ENCODE measurements at regions of chr7 and their contacts with region 1.

Region 1: GRCh38 chr7:89622838-89623672 is 531.2 kb upstream of the STEAP1 start:
- DNase-seq: no peak
- H3K4me3 Mint-ChIP-seq: no peak overlapping the region
- H3K27ac Mint-ChIP-seq: peak overlapping the region; percentile 11
- H3K4me1 Mint-ChIP-seq: peaks cover 26% of the 10 kb centered on the region
- H3K27me3 Mint-ChIP-seq: no peaks in the 10 kb centered on the region

Region 2: GRCh38 chr7:88243345-88243909 is 1379.6 kb before region 1 on chr7:
- intact Hi-C with region 1: loop called (anchors 5 kb)
- DNase-seq: no peak
- H3K4me3 Mint-ChIP-seq: no peak overlapping the region
- H3K27ac Mint-ChIP-seq: no peak overlapping the region
- H3K4me1 Mint-ChIP-seq: no peaks in the 10 kb centered on the region
- H3K27me3 Mint-ChIP-seq: peaks cover 11% of the 10 kb centered on the region

Region 3: DNA sequence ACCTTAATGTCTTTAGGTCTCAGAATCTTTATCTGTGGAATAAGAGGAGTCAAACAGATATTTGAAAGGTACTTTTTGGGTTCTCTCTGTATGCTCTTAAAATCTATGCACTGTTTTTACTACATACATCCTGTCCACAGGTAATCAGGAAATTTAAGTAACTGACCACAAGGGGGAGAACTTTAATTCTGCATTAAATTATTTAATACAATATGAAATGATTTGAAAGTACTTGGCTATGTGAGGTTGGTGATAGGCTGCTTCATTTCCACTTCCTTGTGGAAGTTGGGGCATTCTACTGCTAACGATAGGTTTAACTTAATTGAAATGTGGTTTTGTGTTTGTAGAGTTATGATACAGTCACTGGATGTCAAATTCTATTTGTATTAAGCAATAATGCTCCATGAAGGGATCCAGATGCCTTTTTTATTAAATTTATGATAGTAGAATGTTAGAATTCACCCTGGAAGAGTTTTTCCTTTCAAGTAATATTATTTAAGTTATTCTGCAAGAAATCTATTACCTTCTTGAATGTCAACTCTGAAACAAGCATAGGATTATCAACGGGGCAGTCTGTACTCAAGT is 833.5 kb before region 1 on chr7:
- intact Hi-C with region 1: loop called (anchors 1 kb)
- DNase-seq: no peak
- H3K4me3 Mint-ChIP-seq: no peak overlapping the region
- H3K27ac Mint-ChIP-seq: no peak overlapping the region
- H3K4me1 Mint-ChIP-seq: no peaks in the 10 kb centered on the region
- H3K27me3 Mint-ChIP-seq: peaks cover 2% of the 10 kb centered on the region

Region 4: GRCh38 chr7:88967432-88967831 is 655.6 kb before region 1 on chr7:
- intact Hi-C with region 1: loop called (anchors 1 kb)
- DNase-seq: no peak
- H3K4me3 Mint-ChIP-seq: no peak overlapping the region
- H3K27ac Mint-ChIP-seq: no peak overlapping the region
- H3K4me1 Mint-ChIP-seq: no peaks in the 10 kb centered on the region
- H3K27me3 Mint-ChIP-seq: no peaks in the 10 kb centered on the region

Region 5: GRCh38 chr7:89339748-89340147 is 283.3 kb before region 1 on chr7:
- intact Hi-C with region 1: loop called (anchors 5 kb)
- DNase-seq: no peak
- H3K4me3 Mint-ChIP-seq: no peak overlapping the region
- H3K27ac Mint-ChIP-seq: no peak overlapping the region
- H3K4me1 Mint-ChIP-seq: no peaks in the 10 kb centered on the region
- H3K27me3 Mint-ChIP-seq: no peaks in the 10 kb centered on the region

Region 6: GRCh38 chr7:89503281-89503680 is 119.8 kb before region 1 on chr7:
- intact Hi-C with region 1: loop called (anchors 5 kb)
- DNase-seq: no peak
- H3K4me3 Mint-ChIP-seq: no peak overlapping the region
- H3K27ac Mint-ChIP-seq: no peak overlapping the region
- H3K4me1 Mint-ChIP-seq: no peaks in the 10 kb centered on the region
- H3K27me3 Mint-ChIP-seq: no peaks in the 10 kb centered on the region

Region 7: GRCh38 chr7:89607792-89608191 is 15.3 kb before region 1 on chr7:
- intact Hi-C with region 1: loop called (anchors 1 kb)
- DNase-seq: peak; percentile 35
- H3K4me3 Mint-ChIP-seq: peak overlapping the region; percentile 70
- H3K27ac Mint-ChIP-seq: peak overlapping the region; percentile 98
- H3K4me1 Mint-ChIP-seq: peaks cover 47% of the 10 kb centered on the region
- H3K27me3 Mint-ChIP-seq: peaks cover 3% of the 10 kb centered on the region

Measured in activated T-helper 1 cell treated with anti-CD3 and anti-CD28 coated beads, Interleukin-12 subunit alpha, Interleukin-12 subunit beta, Interleukin-2, Interleukin-4 antibody, amounts not matched to agents 30 ng/mL and 10 ng/mL and 1 ng/mL, durations not matched to agents 14 hours and 24 hours and 36 hours (primary cell).